Aorta (tissue), 5 donors: ENCODE measurements at regions of chr20 and their contacts with region 1.

Region 1: DNA sequence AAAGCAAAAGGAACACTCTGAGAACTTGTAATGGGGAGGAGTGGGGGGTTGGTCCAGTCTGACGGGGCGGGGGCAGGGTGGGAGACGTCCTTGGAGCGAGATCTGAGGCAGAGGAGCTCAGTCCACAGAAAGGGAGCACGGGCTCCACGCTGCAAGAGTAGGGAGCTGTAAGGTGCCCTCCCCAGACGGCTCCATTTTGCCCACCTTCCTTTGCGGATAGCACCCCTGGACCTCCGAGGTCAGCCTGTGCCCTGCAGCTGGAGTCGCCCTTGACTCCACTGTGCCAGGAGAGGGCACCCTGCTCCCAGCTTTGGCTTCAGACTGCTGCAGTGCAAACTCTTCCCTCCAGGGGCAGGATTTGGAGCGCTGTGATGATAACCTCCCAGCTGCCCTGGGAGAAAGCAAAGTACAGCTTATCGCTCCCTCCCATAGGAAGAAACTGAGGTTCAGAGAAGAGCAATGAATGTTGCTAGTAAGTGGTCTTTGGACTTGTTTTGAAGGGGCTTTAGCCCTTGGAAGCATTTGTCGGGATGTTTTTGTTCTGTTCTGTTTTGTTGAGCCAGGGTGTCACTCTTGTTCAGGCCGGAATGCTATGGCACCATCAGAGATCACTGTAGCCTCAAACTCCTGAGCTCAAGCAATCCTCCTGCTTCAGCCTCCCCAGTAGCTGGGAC is 9.5 kb upstream of the AHCY start:
- DNase-seq: peak; percentile 90 to 92
- ATAC-seq: peak; percentile 94
- H3K4me3 ChIP-seq: no peak overlapping the region
- H3K27ac ChIP-seq: no peak overlapping the region
- H3K4me1 ChIP-seq: no peaks in the 10 kb centered on the region
- H3K27me3 ChIP-seq: no peaks in the 10 kb centered on the region

Region 2: DNA sequence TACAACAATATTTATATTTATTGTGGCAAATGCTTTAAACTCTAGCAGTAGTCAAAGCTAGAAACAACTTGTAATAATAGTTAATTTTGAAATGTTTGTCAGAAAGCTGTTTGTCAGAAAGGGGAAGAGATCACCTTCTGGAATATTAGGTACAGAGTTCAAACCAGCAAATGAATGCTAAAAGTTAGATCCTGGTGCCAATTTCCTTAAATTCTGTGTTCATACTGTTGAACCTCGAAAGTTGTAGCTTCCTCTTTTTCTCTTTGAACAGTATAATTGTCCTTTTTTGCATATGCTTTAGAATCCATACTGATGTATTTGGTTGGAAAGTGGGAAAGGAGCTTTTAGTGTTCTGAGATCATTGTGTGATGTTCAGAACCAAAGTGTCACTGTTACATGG is 72.8 kb after region 1 on chr20:
- intact Hi-C with region 1: no loop called
- DNase-seq: no peak
- ATAC-seq: no peak
- H3K4me3 ChIP-seq: no peak overlapping the region
- H3K27ac ChIP-seq: no peak overlapping the region
- H3K4me1 ChIP-seq: peaks cover 0 to 3% of the 10 kb centered on the region in 2 donors
- H3K27me3 ChIP-seq: no peaks in the 10 kb centered on the region

Region 3: GRCh38 chr20:34437330-34437986 is 124.8 kb after region 1 on chr20:
- intact Hi-C with region 1: loop called in 1 of 2 experiments (anchors 10 kb)
- DNase-seq: no peak
- ATAC-seq: no peak
- H3K4me3 ChIP-seq: no peak overlapping the region
- H3K27ac ChIP-seq: peak overlapping the region in 1 of 2 donors; percentile 51
- H3K4me1 ChIP-seq: peaks cover 0 to 2% of the 10 kb centered on the region in 2 donors
- H3K27me3 ChIP-seq: no peaks in the 10 kb centered on the region

Region 4: GRCh38 chr20:34475979-34476736 is 163.5 kb after region 1 on chr20:
- intact Hi-C with region 1: loop called in 1 of 2 experiments (anchors 5 kb)
- DNase-seq: peak; percentile 66 to 88
- ATAC-seq: peak; percentile 93
- H3K4me3 ChIP-seq: no peak overlapping the region
- H3K27ac ChIP-seq: no peak overlapping the region
- H3K4me1 ChIP-seq: no peaks in the 10 kb centered on the region
- H3K27me3 ChIP-seq: no peaks in the 10 kb centered on the region

Region 5: GRCh38 chr20:34516247-34517113 is 203.8 kb after region 1 on chr20 and contains the start of gene DYNLRB1:
- intact Hi-C with region 1: loop called (anchors 2 to 10 kb)
- DNase-seq: peak; percentile 99
- ATAC-seq: peak; percentile 97
- H3K4me3 ChIP-seq: peak within 1 kb of the TSS; percentile 57 to 86
- H3K27ac ChIP-seq: peak within 1 kb of the TSS; percentile 49 to 70
- H3K4me1 ChIP-seq: no peaks in the 10 kb centered on the region
- H3K27me3 ChIP-seq: no peaks in the 10 kb centered on the region
- total RNA-seq, gene DYNLRB1: 120 to 143 TPM

Region 6: GRCh38 chr20:34522969-34523871 is 210.5 kb after region 1 on chr20:
- intact Hi-C with region 1: loop called (anchors 2 to 10 kb)
- DNase-seq: no peak
- ATAC-seq: peak; percentile 44
- H3K4me3 ChIP-seq: no peak overlapping the region
- H3K27ac ChIP-seq: peak overlapping the region in 1 of 2 donors; percentile 46
- H3K4me1 ChIP-seq: peaks cover 0 to 1% of the 10 kb centered on the region in 2 donors
- H3K27me3 ChIP-seq: no peaks in the 10 kb centered on the region

Region 7: GRCh38 chr20:34753706-34754461 is 441.2 kb after region 1 on chr20:
- intact Hi-C with region 1: loop called in 1 of 2 experiments (anchors 10 kb)
- DNase-seq: no peak
- ATAC-seq: no peak
- H3K4me3 ChIP-seq: no peak overlapping the region
- H3K27ac ChIP-seq: no peak overlapping the region
- H3K4me1 ChIP-seq: no peaks in the 10 kb centered on the region
- H3K27me3 ChIP-seq: no peaks in the 10 kb centered on the region